AG04449 (cell line): ENCODE measurements at regions of chr7 and their contacts with region 1.

Region 1: DNA sequence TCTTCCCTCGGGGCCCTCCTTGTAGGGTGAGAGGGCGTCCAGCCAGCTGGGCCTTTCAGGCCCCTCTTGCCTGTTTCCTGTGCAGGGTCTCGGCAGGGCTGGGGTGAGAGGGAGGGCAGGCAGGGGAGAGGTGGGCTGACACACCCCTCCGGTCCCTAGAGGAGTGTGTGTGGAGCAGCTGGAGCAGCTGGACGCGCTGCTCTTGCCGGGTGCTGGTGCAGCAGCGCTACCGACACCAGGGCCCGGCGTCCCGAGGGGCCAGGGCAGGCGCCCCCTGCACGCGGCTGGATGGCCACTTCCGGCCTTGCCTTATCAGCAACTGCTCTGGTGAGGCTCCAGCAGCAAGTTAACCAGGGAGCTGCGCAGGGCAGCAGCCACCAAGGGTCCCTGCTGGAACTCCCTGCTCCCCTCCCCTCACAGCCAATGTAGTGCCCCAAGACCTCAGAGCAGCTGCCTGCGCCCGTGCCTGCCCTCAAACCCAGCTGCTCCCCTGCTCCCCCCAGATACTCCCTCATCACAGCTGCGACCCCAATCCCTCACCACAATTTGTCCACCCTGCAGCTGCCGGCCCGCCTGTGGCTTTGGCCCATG is 15.7 kb upstream of the ZNF862 start:
- DNase-seq: no peak
- H3K4me3 ChIP-seq: no peak overlapping the region
- CTCF ChIP-seq: no peak

Region 2: GRCh38 chr7:149806726-149807125 is 15.7 kb before region 1 on chr7:
- CTCF ChIA-PET with region 1: interaction called, 12 read pairs
- POLR2A ChIA-PET with region 1: no interaction called
- DNase-seq: no peak
- H3K4me3 ChIP-seq: no peak overlapping the region
- CTCF ChIP-seq: no peak